ENCODE measurements at regions of chr6 and their contacts with region 1.

Region 1: DNA sequence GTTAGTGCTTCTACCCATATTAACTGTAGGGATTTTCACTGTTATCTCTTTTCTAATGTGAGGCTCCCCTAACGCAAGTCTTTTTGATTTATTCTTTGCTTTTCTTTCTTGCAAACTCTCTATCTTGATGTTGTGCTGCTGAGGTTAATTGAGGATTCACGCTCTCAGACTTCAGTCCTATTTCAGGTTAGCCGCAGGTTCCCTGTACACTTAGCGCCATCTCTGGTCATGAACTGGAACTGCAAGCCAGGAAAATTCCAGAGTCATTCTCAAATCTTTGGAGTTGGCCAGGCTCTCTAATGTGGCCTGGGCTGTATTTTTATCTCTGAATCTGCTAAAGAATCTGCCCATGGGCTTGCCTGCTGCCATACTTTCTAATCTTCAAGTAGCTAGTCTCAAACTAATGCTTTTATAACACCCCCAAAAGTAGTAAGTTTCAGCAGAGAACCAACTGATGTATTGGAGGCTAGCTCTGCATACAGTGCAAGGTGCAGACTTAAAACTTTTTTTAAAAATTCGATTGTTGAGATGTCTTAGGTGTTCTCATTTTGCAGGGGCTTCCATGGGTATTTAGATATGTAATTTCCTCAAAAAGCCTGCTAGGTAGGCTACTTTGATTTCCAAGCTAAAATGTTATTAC is 91.1 kb upstream of the OPRM1 start:
- DNase-seq: peak in 4 of 10 donors; percentile 12 to 66 (median 24)

Region 2: DNA sequence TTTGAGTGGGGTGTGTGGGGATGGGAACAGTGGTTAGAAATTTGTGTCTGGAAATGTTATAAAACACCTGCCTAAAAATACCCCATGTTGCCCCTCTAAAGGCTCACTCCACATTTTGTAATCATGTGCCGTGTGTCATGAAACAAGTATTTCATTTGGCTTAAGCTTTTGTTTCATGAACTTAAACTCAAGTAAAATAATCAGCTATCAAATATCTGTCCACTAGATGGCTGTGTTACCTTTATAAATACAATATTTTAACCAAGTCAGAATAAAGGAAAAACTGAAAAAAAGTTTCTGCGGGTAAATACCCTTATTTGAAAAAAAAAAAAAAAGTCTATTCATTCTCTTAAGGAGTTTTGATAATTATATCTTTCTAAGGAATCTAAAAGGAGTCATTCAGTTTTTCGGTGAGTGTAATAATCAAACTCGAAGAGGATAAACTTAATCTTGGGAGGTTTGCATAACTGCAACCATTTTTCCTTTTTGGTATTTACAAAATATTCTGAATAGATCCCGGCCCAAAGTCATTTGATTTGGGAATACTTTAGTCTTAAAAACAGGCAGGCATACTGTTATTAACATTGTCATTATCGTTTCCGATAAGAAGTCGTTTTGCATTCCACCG is 915.6 kb before region 1 on chr6:
- intact Hi-C with region 1: loop called (anchors 10 kb)
- DNase-seq: no peak

Region 3: GRCh38 chr6:153231048-153231646 is 716.8 kb before region 1 on chr6:
- intact Hi-C with region 1: loop called (anchors 5 kb)
- DNase-seq: peak; percentile 25 to 93 (median 70)

Measured in posterior cingulate gyrus (tissue), 11 donors.